Esophagus muscularis mucosa (tissue), 4 donors: ENCODE measurements at regions of chr12 and their contacts with region 1.

Region 1: DNA sequence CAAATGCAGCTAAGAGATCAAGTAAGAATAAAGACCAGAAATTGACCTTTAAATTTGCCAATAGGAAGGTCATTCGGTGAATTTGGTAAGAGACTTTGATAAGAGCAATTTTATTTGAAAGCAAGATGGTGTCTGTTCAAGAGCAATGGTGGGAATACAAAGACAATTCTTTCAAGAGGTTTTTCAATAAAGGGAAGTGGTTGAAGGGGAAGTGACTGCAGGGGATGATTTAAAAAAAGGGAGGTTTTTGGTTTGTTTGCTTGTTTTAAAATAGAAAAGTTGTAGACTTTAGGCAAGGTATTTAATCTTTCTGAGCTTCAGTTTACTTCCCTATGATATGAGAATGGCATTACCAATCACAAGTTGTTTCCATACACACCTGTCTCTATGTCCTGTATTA is 4.3 kb upstream of the APPL2 start:
- DNase-seq: no peak
- H3K4me3 ChIP-seq: no peak overlapping the region
- H3K27ac ChIP-seq: no peak overlapping the region
- H3K4me1 ChIP-seq: peaks cover 0 to 10% (median 7%) of the 10 kb centered on the region in 4 donors
- H3K27me3 ChIP-seq: no peaks in the 10 kb centered on the region
- CTCF ChIP-seq: no peak
- EP300 ChIP-seq: no peak
- POLR2A ChIP-seq: no peak

Region 2: DNA sequence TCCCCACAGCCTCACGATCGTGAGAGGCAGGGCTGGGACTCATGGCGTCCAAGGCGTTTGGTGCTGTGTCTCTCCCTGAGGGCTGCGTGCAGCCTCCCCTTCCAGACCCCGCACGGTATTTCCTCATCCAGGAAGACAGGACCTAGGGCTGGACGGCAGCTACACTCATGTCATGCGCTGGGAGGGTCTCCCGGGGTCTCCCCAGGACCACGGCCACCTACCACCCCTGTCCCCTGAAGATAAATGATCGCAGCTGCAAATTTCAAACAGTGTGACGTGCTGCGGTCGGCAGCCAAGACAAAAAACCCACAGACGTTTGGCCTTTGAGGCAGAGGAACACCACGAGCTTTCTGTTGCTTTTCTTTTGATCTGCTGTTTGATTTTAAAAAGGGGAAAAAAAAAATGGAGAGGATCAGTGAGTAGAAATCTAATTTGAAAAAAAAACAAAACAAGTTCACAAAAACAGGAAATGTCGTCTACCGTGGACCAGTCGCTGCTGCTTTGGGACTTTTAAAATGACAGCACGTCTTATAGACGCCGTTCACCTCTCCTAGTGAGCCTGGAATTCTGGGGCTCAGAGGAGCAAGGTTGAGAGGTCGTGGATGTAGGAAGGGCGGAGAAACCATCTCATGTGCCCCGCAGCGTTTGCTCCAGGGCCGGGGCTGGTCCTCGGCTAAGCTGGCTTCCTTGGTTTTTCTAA is 519.7 kb before region 1 on chr12:
- intact Hi-C with region 1: loop called (anchors 10 kb)
- DNase-seq: no peak
- H3K4me3 ChIP-seq: peak overlapping the region; percentile 36 to 49 (median 40)
- H3K27ac ChIP-seq: peak overlapping the region; percentile 20 to 59 (median 54)
- H3K4me1 ChIP-seq: peaks cover 11 to 35% (median 20%) of the 10 kb centered on the region in 4 donors
- H3K27me3 ChIP-seq: no peaks in the 10 kb centered on the region
- CTCF ChIP-seq: no peak
- EP300 ChIP-seq: no peak
- POLR2A ChIP-seq: no peak

Region 3: DNA sequence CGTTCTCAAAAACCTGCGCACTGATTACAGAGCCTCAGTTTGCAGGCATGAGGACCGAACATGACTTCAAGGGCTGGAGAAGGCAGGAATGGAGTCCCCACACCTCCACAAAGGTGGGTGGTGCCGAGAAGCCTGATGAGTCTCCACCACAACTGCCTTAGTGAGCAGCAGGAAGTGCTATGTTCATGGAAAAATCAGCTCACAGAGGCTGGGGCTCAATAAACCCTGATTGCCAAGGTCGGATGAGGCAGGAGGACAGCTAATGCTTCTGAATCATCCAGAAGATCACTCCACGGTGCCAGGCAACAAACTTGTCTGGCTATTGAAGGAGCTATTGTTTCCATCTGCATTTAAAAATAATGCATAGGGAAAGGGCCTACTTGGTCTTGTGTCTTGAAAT is 35.3 kb before region 1 on chr12:
- intact Hi-C with region 1: no loop called
- DNase-seq: no peak
- H3K4me3 ChIP-seq: no peak overlapping the region
- H3K27ac ChIP-seq: no peak overlapping the region
- H3K4me1 ChIP-seq: peaks cover 0 to 11% (median 2%) of the 10 kb centered on the region in 4 donors
- H3K27me3 ChIP-seq: no peaks in the 10 kb centered on the region
- CTCF ChIP-seq: no peak
- EP300 ChIP-seq: no peak
- POLR2A ChIP-seq: no peak